Endothelial cell of umbilical vein (primary cell): ENCODE measurements at regions of chr6 and their contacts with region 1.

Region 1: DNA sequence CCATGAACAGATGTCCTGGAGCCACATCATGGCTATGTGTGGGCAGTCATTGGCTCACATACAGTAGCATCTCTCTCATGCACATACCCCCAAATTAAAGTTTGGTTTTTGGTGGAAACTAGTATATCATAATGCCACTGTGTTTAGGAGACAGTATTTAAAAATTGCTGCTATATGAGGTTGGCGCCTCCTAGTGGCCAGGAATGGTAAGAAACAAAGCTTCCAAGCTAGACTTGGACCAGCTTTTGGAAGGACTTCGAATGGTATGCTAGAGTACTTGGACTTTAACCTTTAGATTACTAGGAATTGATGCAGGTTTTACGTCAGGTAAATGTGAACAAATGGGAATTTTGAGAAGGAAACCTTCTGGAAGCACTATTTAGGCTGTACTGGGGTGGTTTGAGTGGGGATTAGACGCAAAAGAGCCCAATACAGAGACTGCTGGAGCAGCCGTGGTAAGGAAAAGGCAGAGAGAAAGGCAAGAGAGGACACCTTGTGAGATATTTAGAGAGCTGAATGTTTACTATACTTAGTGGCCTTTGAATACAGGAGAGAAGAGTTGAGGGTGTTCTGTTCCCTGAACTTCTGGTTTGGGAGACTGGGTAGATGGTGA is 23.8 kb downstream of the PRSS35 start:
- DNase-seq: peak; percentile 58
- H3K4me3 ChIP-seq: no peak overlapping the region
- H3K27ac ChIP-seq: no peak overlapping the region
- H3K4me1 ChIP-seq: no peaks in the 10 kb centered on the region
- H3K27me3 ChIP-seq: peaks cover 0 to 7% of the 10 kb centered on the region in 2 experiments
- CTCF ChIP-seq: peak; percentile 69 to 81
- POLR2A ChIP-seq: no peak

Region 2: DNA sequence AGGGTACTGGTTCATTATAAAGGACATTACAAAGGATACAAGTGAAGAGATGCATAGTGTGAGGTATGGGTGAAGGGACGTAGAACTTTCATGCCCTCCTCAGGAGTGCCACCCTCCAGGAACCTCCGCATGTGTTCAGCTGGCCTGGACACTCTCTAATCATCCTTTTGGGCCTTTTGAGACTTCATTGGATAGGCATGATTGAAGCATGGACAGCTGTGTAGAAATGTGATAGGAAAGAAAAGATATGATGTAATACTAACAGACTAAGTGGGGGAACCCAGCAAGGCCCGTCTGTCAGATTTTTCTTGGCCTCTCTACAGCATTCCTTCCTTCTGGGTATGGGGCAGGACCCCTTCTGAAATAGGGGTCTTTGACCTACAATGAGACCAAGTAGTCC is 437.6 kb before region 1 on chr6:
- CTCF ChIA-PET with region 1: no interaction called
- POLR2A ChIA-PET with region 1: no interaction called
- dilution Hi-C with region 1: no loop called
- intact Hi-C with region 1: no loop called
- DNase-seq: no peak
- H3K4me3 ChIP-seq: no peak overlapping the region
- H3K27ac ChIP-seq: no peak overlapping the region
- H3K4me1 ChIP-seq: peaks cover 5% of the 10 kb centered on the region
- H3K27me3 ChIP-seq: no peaks in the 10 kb centered on the region
- CTCF ChIP-seq: no peak
- POLR2A ChIP-seq: no peak

Region 3: GRCh38 chr6:83221889-83222479 is 314.2 kb before region 1 on chr6:
- CTCF ChIA-PET with region 1: interaction called, 26 read pairs
- POLR2A ChIA-PET with region 1: no interaction called
- dilution Hi-C with region 1: no loop called
- intact Hi-C with region 1: no loop called
- DNase-seq: peak; percentile 46
- H3K4me3 ChIP-seq: no peak overlapping the region
- H3K27ac ChIP-seq: no peak overlapping the region
- H3K4me1 ChIP-seq: peaks cover 9% of the 10 kb centered on the region
- H3K27me3 ChIP-seq: no peaks in the 10 kb centered on the region
- CTCF ChIP-seq: peak in 1 of 2 donors; percentile 29
- POLR2A ChIP-seq: no peak

Region 4: GRCh38 chr6:83546636-83547035 is 10.5 kb after region 1 on chr6:
- CTCF ChIA-PET with region 1: interaction called, 16 read pairs
- POLR2A ChIA-PET with region 1: no interaction called
- dilution Hi-C with region 1: no loop called
- intact Hi-C with region 1: no loop called
- DNase-seq: no peak
- H3K4me3 ChIP-seq: no peak overlapping the region
- H3K27ac ChIP-seq: no peak overlapping the region
- H3K4me1 ChIP-seq: no peaks in the 10 kb centered on the region
- H3K27me3 ChIP-seq: no peaks in the 10 kb centered on the region
- CTCF ChIP-seq: no peak
- POLR2A ChIP-seq: no peak

Region 5: DNA sequence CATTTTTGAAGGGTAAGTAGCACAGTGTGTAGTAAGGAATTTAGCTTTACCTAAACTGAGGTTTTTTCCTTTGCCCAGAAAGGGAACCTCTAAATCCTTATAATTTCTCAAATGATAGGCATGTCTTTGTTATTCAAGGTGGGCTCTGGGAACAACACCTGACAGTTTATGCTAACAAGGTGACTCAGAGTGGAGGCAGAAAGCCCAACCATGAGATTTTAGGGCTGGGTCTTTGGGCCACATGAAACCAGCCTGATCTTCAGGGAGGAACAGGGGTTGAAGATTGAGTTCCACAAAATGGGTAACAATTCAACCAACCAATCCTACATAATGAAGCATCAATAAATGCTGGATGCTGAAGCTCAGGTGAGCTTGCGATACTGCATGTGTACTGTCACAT is 22.8 kb after region 1 on chr6:
- CTCF ChIA-PET with region 1: interaction called, 32 read pairs
- POLR2A ChIA-PET with region 1: no interaction called
- dilution Hi-C with region 1: no loop called
- intact Hi-C with region 1: no loop called
- DNase-seq: no peak
- H3K4me3 ChIP-seq: no peak overlapping the region
- H3K27ac ChIP-seq: no peak overlapping the region
- H3K4me1 ChIP-seq: no peaks in the 10 kb centered on the region
- H3K27me3 ChIP-seq: no peaks in the 10 kb centered on the region
- CTCF ChIP-seq: no peak
- POLR2A ChIP-seq: no peak

Region 6: DNA sequence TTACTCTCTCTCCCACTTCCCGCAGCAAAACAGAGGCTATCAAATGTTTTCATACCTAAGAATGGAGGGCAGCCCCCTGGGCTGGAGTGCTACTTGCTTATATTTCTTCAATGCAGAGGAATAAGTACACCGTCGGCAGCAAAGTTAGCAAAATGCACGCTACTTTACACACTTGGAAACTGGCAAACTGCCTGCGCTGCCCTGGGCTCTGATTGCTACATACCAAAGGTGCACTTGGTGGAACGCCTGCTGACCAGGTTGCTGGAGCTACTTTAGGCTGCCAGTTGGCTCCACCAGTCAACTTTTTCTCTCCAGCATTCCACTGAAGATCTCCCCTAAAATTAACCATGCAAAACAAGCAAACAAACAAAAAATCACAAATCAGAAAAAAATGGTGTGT is 38.6 kb after region 1 on chr6:
- CTCF ChIA-PET with region 1: no interaction called
- POLR2A ChIA-PET with region 1: no interaction called
- dilution Hi-C with region 1: no loop called
- intact Hi-C with region 1: no loop called
- DNase-seq: no peak
- H3K4me3 ChIP-seq: no peak overlapping the region
- H3K27ac ChIP-seq: no peak overlapping the region
- H3K4me1 ChIP-seq: no peaks in the 10 kb centered on the region
- H3K27me3 ChIP-seq: no peaks in the 10 kb centered on the region
- CTCF ChIP-seq: no peak
- POLR2A ChIP-seq: no peak